ENCODE measurements at regions of chr7 and their contacts with region 1.

Region 1: GRCh38 chr7:19754521-19755116 is 18.8 kb downstream of the TMEM196 start:
- DNase-seq: peak; percentile 27
- H3K4me3 ChIP-seq: no peak overlapping the region
- H3K27ac ChIP-seq: no peak overlapping the region
- H3K4me1 ChIP-seq: peaks cover 4% of the 10 kb centered on the region
- H3K27me3 ChIP-seq: no peaks in the 10 kb centered on the region
- CTCF ChIP-seq: peak; percentile 65 to 68

Region 2: GRCh38 chr7:19060761-19061259 is 693.8 kb before region 1 on chr7:
- CTCF ChIA-PET with region 1: no interaction called
- dilution Hi-C with region 1: no loop called
- in situ Hi-C with region 1: no loop called
- intact Hi-C with region 1: no loop called
- DNase-seq: peak; percentile 19
- H3K4me3 ChIP-seq: no peak overlapping the region
- H3K27ac ChIP-seq: no peak overlapping the region
- H3K4me1 ChIP-seq: no peaks in the 10 kb centered on the region
- H3K27me3 ChIP-seq: no peaks in the 10 kb centered on the region
- CTCF ChIP-seq: no peak

Region 3: GRCh38 chr7:19681596-19681995 is 73.0 kb before region 1 on chr7:
- CTCF ChIA-PET with region 1: no interaction called
- dilution Hi-C with region 1: no loop called
- in situ Hi-C with region 1: no loop called
- intact Hi-C with region 1: no loop called
- DNase-seq: no peak
- H3K4me3 ChIP-seq: no peak overlapping the region
- H3K27ac ChIP-seq: no peak overlapping the region
- H3K4me1 ChIP-seq: no peaks in the 10 kb centered on the region
- H3K27me3 ChIP-seq: no peaks in the 10 kb centered on the region
- CTCF ChIP-seq: no peak

Region 4: DNA sequence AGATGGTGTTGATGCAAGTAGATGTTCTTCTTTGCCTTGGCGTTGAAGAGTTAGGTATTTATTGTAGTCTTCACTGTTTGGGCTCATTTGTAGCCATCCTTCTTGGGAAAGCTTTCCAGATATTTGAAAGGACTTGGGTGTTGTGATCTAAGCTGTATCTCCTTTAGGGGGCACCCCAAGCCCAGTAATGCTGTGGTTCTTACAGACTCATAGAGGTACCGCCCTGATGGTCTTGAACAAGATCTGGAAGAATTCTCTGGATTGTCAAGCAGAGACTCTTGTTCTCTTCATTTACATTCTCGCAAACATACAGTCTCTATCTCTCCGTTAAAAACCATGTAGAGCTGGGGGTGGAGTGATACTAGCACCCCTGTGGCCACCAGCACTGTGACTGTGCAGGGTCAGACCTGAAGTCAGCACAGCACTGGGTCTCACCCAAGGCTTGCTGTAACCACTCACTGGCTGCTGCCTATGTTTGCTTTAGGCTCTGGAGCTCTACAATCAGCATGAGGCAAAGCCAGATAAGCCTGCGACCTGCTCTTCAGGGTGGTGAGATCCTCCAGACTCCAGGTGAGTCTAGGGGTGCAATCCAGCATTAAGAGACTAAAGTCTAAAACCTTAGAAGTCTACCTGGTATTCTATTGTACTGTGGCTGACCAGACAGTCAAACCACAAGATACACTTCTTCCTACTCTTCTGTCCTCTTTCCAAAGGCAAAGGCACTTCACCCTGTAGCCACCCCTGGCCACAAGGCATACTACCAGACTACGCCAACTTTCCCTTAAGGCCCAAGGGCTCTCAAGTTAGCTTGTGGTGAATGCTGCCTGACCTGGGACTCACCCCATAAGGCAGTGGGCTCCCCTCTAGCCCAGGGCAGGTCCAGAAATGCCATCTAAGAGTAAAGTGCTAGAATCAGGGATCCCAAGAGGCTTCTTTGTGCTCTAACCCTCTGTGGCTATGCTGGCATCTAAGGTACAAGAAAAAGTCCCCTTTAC is 228.5 kb after region 1 on chr7:
- CTCF ChIA-PET with region 1: no interaction called
- dilution Hi-C with region 1: no loop called
- in situ Hi-C with region 1: no loop called
- intact Hi-C with region 1: loop called (anchors 2 kb)
- DNase-seq: peak; percentile 45
- H3K4me3 ChIP-seq: no peak overlapping the region
- H3K27ac ChIP-seq: no peak overlapping the region
- H3K4me1 ChIP-seq: no peaks in the 10 kb centered on the region
- H3K27me3 ChIP-seq: no peaks in the 10 kb centered on the region
- CTCF ChIP-seq: peak in 1 of 2 donors; percentile 40

Region 5: GRCh38 chr7:20164425-20165145 is 410.0 kb after region 1 on chr7:
- CTCF ChIA-PET with region 1: no interaction called
- dilution Hi-C with region 1: no loop called
- in situ Hi-C with region 1: loop called in 1 of 2 experiments (anchors 5 kb)
- intact Hi-C with region 1: no loop called
- DNase-seq: no peak
- H3K4me3 ChIP-seq: no peak overlapping the region
- H3K27ac ChIP-seq: no peak overlapping the region
- H3K4me1 ChIP-seq: no peaks in the 10 kb centered on the region
- H3K27me3 ChIP-seq: no peaks in the 10 kb centered on the region
- CTCF ChIP-seq: no peak

Region 6: DNA sequence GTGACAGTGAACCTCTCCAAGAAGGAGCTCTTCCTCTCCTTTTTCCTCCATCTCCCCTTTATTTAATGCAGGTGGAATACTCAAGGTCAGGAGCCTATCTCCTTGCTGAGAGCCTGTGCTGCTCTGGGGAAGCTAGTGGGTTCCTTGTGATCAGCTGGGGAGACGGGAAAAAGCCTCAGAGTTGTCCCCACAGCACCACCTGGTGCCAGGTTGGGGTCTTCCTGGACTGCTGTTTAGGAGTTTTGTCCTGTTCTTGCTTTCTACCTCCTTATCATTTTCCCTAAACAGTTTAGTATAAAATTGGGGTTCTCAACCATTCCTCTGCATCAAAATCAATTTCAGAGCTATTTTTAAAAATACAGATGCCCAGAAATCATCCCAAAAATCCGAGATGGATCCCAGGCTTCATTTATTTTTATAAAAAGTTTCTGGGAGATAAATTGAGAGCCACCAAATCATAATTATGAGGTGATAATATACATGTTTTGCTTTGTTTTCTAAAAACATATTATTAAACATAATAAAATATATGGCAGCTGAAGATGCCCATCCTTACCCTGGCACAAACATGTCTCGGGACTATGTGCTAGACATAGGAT is 418.2 kb after region 1 on chr7:
- CTCF ChIA-PET with region 1: no interaction called
- dilution Hi-C with region 1: no loop called
- in situ Hi-C with region 1: loop called (anchors 5 to 10 kb)
- intact Hi-C with region 1: loop called (anchors 1 kb)
- DNase-seq: peak; percentile 41
- H3K4me3 ChIP-seq: no peak overlapping the region
- H3K27ac ChIP-seq: no peak overlapping the region
- H3K4me1 ChIP-seq: no peaks in the 10 kb centered on the region
- H3K27me3 ChIP-seq: no peaks in the 10 kb centered on the region
- CTCF ChIP-seq: peak; percentile 70 to 81

Region 7: DNA sequence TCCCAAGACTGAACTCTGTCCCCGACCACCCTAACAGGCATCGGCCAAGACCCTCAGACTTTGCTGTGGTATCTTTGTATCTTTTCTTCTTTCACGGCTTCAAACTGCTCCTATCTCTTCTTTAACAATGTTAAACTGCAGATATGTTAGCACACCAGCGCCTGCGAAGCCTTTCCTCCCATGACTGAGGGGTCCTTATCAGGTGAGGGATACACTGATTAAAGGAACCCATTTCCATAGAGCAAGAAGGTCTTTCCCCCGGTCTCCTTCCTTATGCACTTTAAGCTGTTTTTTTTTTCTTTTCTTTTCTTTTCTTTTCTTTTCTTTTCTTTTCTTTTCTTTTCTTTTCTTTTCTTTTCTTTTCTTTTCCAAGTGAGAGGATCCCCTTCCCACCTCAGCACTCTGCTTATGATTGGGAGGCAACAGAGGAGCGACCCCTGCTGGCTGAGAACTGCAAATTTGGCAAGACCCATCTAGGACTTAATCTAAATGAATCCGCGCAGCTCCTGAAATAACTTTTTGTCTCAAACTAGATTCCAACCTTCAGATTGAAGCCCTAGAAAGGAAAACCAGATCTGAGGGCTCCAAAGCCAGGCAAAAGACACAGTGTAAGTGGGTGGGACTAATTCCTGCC is 686.0 kb after region 1 on chr7:
- CTCF ChIA-PET with region 1: no interaction called
- dilution Hi-C with region 1: no loop called
- in situ Hi-C with region 1: no loop called
- intact Hi-C with region 1: loop called (anchors 10 kb)
- DNase-seq: no peak
- H3K4me3 ChIP-seq: no peak overlapping the region
- H3K27ac ChIP-seq: no peak overlapping the region
- H3K4me1 ChIP-seq: no peaks in the 10 kb centered on the region
- H3K27me3 ChIP-seq: no peaks in the 10 kb centered on the region
- CTCF ChIP-seq: peak; percentile 56 to 62